B cell (primary cell): ENCODE measurements at regions of chr7 and their contacts with region 1.

Region 1: GRCh38 chr7:142711746-142712619 is 37.3 kb upstream of the PRSS1 start:
- DNase-seq: peak; percentile 55
- ATAC-seq: peak; percentile 39
- H3K4me3 ChIP-seq: peak overlapping the region in 1 of 5 experiments; percentile 35
- H3K4me3 Mint-ChIP-seq: peak overlapping the region; percentile 66
- H3K27ac ChIP-seq: no peak overlapping the region
- H3K27ac Mint-ChIP-seq: peak overlapping the region; percentile 42
- H3K4me1 ChIP-seq: peaks cover 17 to 25% of the 10 kb centered on the region in 2 donors
- H3K4me1 Mint-ChIP-seq: peaks cover 24% of the 10 kb centered on the region
- H3K27me3 ChIP-seq: no peaks in the 10 kb centered on the region
- H3K27me3 Mint-ChIP-seq: peaks cover 4% of the 10 kb centered on the region
- CTCF ChIP-seq: peak; percentile 84

Region 2: DNA sequence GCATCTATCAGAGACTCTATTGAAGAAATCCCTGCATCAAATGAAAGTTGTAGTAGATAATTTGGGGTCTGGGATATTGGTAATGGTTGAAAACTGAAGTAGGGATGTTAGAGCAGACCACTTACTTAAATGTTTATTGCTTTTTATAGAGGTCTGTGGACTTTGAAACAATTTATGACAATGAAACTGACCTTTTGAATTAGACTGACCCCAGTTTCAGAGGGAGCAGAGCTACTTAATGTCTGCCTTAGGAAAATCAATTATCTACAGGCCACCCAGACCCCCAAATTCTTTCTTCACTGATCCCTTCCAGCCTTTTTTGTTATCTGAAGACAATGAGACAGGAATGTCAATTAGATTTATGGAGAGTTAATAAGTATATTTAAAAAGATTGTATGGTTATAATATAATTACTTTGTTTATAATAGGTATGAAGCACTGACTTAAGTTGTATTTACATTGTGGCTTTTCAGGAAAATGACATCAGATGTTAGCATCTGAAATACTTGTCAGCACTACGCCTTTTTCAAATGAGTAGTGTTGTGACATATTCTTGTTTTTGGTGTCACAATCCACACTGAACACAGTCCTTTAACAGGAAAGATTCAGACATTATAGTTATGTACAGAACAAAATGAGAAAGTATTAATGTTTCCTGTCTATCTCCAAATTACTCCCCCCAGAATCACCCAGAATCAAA is 586.6 kb before region 1 on chr7:
- CTCF ChIA-PET with region 1: no interaction called
- POLR2A ChIA-PET with region 1: no interaction called
- intact Hi-C with region 1: no loop called
- DNase-seq: no peak
- ATAC-seq: no peak
- H3K4me3 ChIP-seq: no peak overlapping the region
- H3K4me3 Mint-ChIP-seq: no peak overlapping the region
- H3K27ac ChIP-seq: no peak overlapping the region
- H3K27ac Mint-ChIP-seq: no peak overlapping the region
- H3K4me1 ChIP-seq: no peaks in the 10 kb centered on the region
- H3K4me1 Mint-ChIP-seq: no peaks in the 10 kb centered on the region
- H3K27me3 ChIP-seq: no peaks in the 10 kb centered on the region
- H3K27me3 Mint-ChIP-seq: peaks cover 4% of the 10 kb centered on the region
- CTCF ChIP-seq: no peak

Region 3: DNA sequence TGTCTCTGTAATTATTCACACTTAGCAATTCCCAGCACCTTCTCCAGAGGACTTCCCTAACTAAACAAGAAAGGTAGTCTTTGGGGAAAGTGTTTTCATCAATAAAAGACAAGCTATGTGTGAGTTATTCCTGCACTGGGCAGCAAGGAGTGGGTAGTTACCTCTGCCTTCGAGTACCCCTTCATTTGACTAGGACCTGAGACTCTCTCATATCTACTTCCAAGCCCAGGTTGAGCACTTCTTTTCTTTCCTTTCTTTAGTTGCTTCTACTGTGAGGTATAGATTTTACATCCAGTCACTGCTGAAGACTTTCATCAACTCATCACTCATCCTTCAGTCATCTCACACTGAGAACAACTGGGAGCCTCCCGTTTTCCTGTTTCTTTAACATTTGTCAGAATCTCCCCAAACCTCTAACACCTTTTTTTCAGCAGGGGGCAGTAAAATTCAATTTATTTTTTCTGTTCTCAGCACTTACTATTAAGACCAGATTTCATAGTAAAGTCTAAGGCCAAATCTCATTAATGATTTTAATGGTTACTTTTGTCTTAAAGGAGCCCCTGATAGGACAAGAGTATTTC is 42.8 kb before region 1 on chr7:
- CTCF ChIA-PET with region 1: interaction called, 5 read pairs
- POLR2A ChIA-PET with region 1: no interaction called
- intact Hi-C with region 1: loop called (anchors 5 kb)
- DNase-seq: peak; percentile 41
- ATAC-seq: peak; percentile 28
- H3K4me3 ChIP-seq: no peak overlapping the region
- H3K4me3 Mint-ChIP-seq: peak overlapping the region; percentile 26
- H3K27ac ChIP-seq: no peak overlapping the region
- H3K27ac Mint-ChIP-seq: no peak overlapping the region
- H3K4me1 ChIP-seq: peaks cover 22 to 37% of the 10 kb centered on the region in 2 donors
- H3K4me1 Mint-ChIP-seq: peaks cover 35% of the 10 kb centered on the region
- H3K27me3 ChIP-seq: no peaks in the 10 kb centered on the region
- H3K27me3 Mint-ChIP-seq: peaks cover under 1% of the 10 kb centered on the region
- CTCF ChIP-seq: peak; percentile 47

Region 4: GRCh38 chr7:142796608-142797385 is 84.8 kb after region 1 on chr7:
- CTCF ChIA-PET with region 1: interaction called, 12 read pairs
- POLR2A ChIA-PET with region 1: interaction called, 15 read pairs
- intact Hi-C with region 1: no loop called
- DNase-seq: peak; percentile 54
- ATAC-seq: peak; percentile 40
- H3K4me3 ChIP-seq: peak overlapping the region; percentile 45 to 93 (median 90)
- H3K4me3 Mint-ChIP-seq: peak overlapping the region; percentile 100
- H3K27ac ChIP-seq: peak overlapping the region; percentile 94 to 99
- H3K27ac Mint-ChIP-seq: peak overlapping the region; percentile 100
- H3K4me1 ChIP-seq: peaks cover 62 to 81% of the 10 kb centered on the region in 2 donors
- H3K4me1 Mint-ChIP-seq: peaks cover 82% of the 10 kb centered on the region
- H3K27me3 ChIP-seq: no peaks in the 10 kb centered on the region
- H3K27me3 Mint-ChIP-seq: no peaks in the 10 kb centered on the region
- CTCF ChIP-seq: no peak

Region 5: DNA sequence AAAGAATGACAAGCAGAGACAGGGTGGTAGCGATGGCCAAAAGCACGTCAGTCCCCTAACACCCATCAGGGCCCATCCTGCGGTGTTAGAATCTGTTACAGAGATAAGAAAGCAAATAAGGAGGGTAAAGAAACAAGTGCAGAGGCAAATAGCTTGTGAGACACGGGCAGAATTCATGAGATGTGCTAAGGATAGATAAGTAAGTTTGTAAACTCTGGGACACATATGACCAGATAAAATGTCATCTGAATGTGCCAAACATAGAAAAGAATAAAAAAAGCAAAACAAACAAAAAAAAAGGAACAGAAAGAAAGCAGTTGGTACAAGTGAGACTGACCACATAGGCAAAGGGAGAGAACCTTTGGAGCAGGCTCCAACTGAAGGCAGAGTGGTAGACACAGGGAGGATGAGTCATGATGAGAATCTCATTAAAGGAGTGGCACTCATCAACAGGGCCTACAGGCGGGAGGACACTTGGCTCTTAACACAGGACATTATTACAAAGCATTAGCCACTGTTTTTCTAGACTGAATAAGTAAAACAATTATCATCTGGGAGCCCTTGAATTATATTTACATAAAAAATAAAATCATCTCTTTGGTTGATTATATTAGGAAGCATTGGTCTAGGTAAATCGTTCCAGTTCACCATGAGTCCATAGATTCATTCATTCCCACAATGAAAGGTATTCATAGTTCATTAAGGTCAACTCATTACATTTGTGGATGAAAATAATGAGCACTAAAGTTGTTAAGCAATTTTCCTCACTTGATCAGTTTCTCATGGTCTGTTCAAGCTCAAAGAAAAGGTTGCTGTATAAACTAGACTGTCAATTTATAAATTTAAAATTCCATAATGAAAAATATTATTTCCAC is 121.4 kb after region 1 on chr7:
- CTCF ChIA-PET with region 1: interaction called, 10 read pairs
- POLR2A ChIA-PET with region 1: no interaction called
- intact Hi-C with region 1: no loop called
- DNase-seq: no peak
- ATAC-seq: no peak
- H3K4me3 ChIP-seq: no peak overlapping the region
- H3K4me3 Mint-ChIP-seq: no peak overlapping the region
- H3K27ac ChIP-seq: no peak overlapping the region
- H3K27ac Mint-ChIP-seq: no peak overlapping the region
- H3K4me1 ChIP-seq: peaks cover 0 to 11% of the 10 kb centered on the region in 2 donors
- H3K4me1 Mint-ChIP-seq: peaks cover 28% of the 10 kb centered on the region
- H3K27me3 ChIP-seq: no peaks in the 10 kb centered on the region
- H3K27me3 Mint-ChIP-seq: no peaks in the 10 kb centered on the region
- CTCF ChIP-seq: no peak

Region 6: DNA sequence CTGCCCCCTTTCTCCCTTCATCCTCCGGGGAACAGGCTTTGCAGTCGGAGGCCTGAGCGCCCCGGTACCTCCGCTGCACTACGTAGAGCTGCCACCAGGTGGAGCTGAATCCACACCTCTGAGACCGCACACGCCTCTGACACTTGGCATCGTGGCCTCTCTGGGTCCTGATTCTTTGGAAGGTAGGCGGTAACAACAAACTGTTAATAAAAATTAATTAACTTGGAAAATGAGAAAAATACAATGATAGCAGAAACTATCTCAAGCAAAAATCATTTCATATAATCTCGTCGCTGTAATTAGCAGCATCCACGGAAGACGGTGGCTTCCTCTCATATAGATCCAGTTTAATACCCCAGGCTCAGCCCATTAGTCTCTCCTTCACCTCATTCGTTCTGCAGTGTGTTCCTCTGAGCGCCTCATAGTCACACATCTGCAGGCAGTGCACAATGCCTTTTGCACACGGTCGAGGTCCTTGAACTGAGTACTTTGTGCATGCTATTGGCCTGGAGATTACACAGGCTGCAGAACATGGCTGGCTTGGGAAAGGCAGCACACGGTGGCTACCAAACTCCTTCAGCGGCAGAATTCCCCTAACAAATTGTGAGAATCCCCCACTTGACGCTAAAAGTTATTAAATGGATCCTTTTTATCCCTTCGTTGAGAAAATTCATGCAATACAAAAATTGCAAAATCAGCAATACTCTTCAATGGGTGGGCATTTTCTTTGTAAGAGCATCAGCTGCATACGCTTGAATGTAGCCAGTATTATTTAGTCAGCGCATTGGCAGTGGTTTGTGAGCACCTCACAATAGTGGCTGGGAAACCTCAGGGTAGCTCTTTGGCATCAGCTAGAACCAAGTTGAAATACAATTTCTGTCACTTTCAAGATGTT is 296.3 kb after region 1 on chr7:
- CTCF ChIA-PET with region 1: interaction called, 18 read pairs
- POLR2A ChIA-PET with region 1: no interaction called
- intact Hi-C with region 1: no loop called
- DNase-seq: peak; percentile 88
- ATAC-seq: peak; percentile 96
- H3K4me3 ChIP-seq: no peak overlapping the region
- H3K4me3 Mint-ChIP-seq: no peak overlapping the region
- H3K27ac ChIP-seq: no peak overlapping the region
- H3K27ac Mint-ChIP-seq: no peak overlapping the region
- H3K4me1 ChIP-seq: peaks cover 36 to 49% of the 10 kb centered on the region in 2 donors
- H3K4me1 Mint-ChIP-seq: peaks cover 49% of the 10 kb centered on the region
- H3K27me3 ChIP-seq: no peaks in the 10 kb centered on the region
- H3K27me3 Mint-ChIP-seq: no peaks in the 10 kb centered on the region
- CTCF ChIP-seq: peak; percentile 92